GM12878 (cell line): ENCODE measurements at regions of chr1 and their contacts with region 1.

Region 1: DNA sequence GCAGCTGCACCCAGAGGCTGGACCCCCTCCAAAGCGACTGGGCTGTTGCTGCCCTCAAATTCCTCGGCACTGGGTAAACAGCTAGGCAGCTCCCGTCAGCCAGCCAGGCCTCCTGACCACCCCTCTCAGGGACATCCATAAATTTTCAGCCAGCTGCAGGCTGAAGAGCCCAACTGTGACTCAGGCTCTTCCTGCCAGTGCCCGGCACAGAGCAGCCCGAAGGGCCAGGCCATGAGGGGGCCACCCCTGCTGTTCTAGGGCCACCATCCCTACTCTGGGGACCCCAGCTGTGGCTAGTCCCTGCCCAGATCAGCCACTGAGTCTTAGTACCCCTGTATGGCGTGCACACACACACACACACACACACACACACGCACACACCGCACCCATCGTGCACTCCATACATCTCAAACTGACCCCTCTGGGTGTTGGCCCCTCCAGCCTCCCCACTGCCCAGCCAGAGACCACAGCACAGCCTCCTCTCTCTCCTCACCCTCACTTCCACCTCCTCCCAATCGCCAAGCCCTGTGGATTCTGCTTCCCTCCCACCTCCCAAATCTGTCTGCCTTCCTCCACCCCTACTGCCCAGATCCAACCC is 6.2 kb upstream of the LAPTM5 start:
- DNase-seq: no peak
- ATAC-seq: no peak
- H3K4me3 ChIP-seq: no peak overlapping the region
- H3K27ac ChIP-seq: peak overlapping the region; percentile 87
- H3K4me1 ChIP-seq: peaks cover 82% of the 10 kb centered on the region
- H3K27me3 ChIP-seq: no peaks in the 10 kb centered on the region
- CTCF ChIP-seq: no peak
- EP300 ChIP-seq: no peak
- POLR2A ChIP-seq: no peak
- RAD21 ChIP-seq: no peak

Region 2: GRCh38 chr1:30743584-30744059 is 20.1 kb before region 1 on chr1:
- CTCF ChIA-PET with region 1: interaction called, 107 read pairs
- POLR2A ChIA-PET with region 1: interaction called, 741 read pairs
- RAD21 ChIA-PET with region 1: interaction called, 462 read pairs
- SMC1A ChIA-PET with region 1: interaction called, 556 read pairs
- in situ Hi-C with region 1: no loop called
- intact Hi-C with region 1: loop called (anchors 2 kb)
- DNase-seq: peak; percentile 82
- ATAC-seq: peak; percentile 44
- H3K4me3 ChIP-seq: peak overlapping the region; percentile 98
- H3K27ac ChIP-seq: peak overlapping the region; percentile 93
- H3K4me1 ChIP-seq: peaks cover 91% of the 10 kb centered on the region
- H3K27me3 ChIP-seq: no peaks in the 10 kb centered on the region
- CTCF ChIP-seq: no peak; a peak in 1 of 6 replicates
- EP300 ChIP-seq: peak in 1 of 2 experiments; percentile 71; a peak in 2 of 4 replicates
- POLR2A ChIP-seq: no peak; the same call in 1 of the 2 replicates
- RAD21 ChIP-seq: no peak

Region 3: DNA sequence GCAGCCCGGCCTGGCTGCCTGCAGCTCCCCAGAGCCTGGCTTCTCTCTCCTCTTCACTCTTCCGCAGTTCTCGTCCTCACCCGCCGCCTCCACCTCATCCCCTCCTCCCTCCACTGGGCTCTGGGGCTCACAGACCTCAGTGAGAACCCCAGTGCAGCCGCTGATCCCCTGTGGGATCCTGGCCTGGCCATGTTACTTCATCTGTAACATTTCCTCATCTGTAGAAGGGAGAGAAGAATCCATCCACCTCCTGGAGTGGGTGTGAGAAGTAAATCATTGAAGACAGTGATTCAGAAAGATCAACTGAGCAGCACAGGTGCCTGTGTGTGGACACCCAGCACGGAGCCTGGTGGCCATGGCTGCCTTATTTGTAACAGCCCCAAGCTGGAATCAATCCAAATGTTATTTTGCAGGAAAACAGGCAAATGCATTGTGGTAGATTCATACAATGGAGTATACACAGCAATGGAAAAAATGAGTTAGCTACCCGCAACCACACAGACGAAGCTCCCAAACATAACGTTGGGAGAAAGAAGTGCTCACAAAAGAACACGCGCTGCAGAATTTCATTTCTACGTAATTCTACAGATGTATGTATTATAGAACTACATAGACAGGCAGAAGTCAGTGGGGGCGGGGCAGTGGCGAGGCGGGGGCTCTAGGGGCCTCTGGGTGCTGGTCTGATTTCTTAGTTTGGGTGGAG is 14.9 kb before region 1 on chr1:
- CTCF ChIA-PET with region 1: interaction called, 107 read pairs
- POLR2A ChIA-PET with region 1: interaction called, 741 read pairs
- RAD21 ChIA-PET with region 1: interaction called, 462 read pairs
- SMC1A ChIA-PET with region 1: interaction called, 440 read pairs
- in situ Hi-C with region 1: no loop called
- intact Hi-C with region 1: loop called (anchors 1 kb)
- DNase-seq: no peak
- ATAC-seq: peak; percentile 1; the same call in 2 of the 3 replicates
- H3K4me3 ChIP-seq: peak overlapping the region; percentile 98
- H3K27ac ChIP-seq: peak overlapping the region; percentile 93
- H3K4me1 ChIP-seq: peaks cover 87% of the 10 kb centered on the region
- H3K27me3 ChIP-seq: no peaks in the 10 kb centered on the region
- CTCF ChIP-seq: no peak
- EP300 ChIP-seq: no peak
- POLR2A ChIP-seq: no peak; the same call in 1 of the 2 replicates
- RAD21 ChIP-seq: no peak

Region 4: DNA sequence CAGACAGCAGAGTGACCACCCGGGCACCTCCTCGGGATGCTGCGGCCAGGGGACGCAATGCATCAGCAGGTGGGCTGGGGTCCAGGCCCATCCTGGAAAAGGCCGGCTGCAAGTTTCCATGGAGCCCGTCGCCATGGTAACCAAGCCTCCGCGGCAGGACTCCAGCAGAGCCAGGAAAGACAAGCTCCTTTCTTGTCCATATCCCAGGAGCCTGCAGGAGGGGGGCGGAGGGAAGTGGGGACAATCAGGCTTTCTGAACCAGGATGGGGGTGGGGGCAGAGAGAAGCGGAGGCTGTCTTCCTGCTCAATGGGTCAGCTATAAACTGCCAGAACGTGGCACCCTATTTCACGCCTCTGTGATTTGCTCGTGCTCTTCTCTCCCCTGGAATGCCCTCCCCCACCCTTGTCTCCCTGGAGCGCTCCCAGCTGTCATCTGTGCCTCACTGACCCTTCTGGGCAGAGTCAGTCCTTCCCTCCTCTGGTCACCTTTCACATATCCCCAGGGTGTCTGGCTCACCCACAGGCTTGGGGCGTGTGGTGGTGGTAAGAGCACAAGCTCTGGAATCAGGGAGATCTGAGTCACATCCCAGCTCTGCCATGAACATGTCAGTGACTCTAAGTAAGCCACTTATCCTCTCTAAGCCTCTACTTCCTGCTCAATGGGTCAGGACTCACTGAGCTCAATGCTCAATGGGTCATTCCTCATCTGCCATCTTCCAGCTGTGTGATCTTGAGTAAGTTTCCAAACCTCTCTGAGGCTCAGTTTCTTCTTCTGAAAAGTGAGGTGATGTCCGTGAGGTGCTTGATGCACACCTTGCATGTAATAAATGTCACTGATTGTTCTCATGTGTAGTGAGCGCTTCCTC is 52.7 kb after region 1 on chr1:
- CTCF ChIA-PET with region 1: no interaction called
- POLR2A ChIA-PET with region 1: no interaction called
- RAD21 ChIA-PET with region 1: no interaction called
- SMC1A ChIA-PET with region 1: no interaction called
- in situ Hi-C with region 1: no loop called
- intact Hi-C with region 1: no loop called
- DNase-seq: no peak
- ATAC-seq: no peak
- H3K4me3 ChIP-seq: no peak overlapping the region
- H3K27ac ChIP-seq: no peak overlapping the region
- H3K4me1 ChIP-seq: no peaks in the 10 kb centered on the region
- H3K27me3 ChIP-seq: peaks cover 13 to 16% of the 10 kb centered on the region in 2 experiments
- CTCF ChIP-seq: no peak
- EP300 ChIP-seq: no peak
- POLR2A ChIP-seq: no peak
- RAD21 ChIP-seq: no peak

Region 5: GRCh38 chr1:30830537-30830936 is 66.8 kb after region 1 on chr1:
- CTCF ChIA-PET with region 1: no interaction called
- POLR2A ChIA-PET with region 1: no interaction called
- RAD21 ChIA-PET with region 1: no interaction called
- SMC1A ChIA-PET with region 1: no interaction called
- in situ Hi-C with region 1: no loop called
- intact Hi-C with region 1: no loop called
- DNase-seq: no peak
- ATAC-seq: no peak
- H3K4me3 ChIP-seq: no peak overlapping the region
- H3K27ac ChIP-seq: no peak overlapping the region
- H3K4me1 ChIP-seq: no peaks in the 10 kb centered on the region
- H3K27me3 ChIP-seq: no peaks in the 10 kb centered on the region
- CTCF ChIP-seq: no peak
- EP300 ChIP-seq: no peak
- POLR2A ChIP-seq: no peak
- RAD21 ChIP-seq: no peak

Region 6: GRCh38 chr1:30902182-30902581 is 138.4 kb after region 1 on chr1:
- CTCF ChIA-PET with region 1: no interaction called
- POLR2A ChIA-PET with region 1: no interaction called
- RAD21 ChIA-PET with region 1: no interaction called
- SMC1A ChIA-PET with region 1: no interaction called
- in situ Hi-C with region 1: no loop called
- intact Hi-C with region 1: no loop called
- DNase-seq: no peak
- ATAC-seq: no peak
- H3K4me3 ChIP-seq: no peak overlapping the region
- H3K27ac ChIP-seq: no peak overlapping the region
- H3K4me1 ChIP-seq: no peaks in the 10 kb centered on the region
- H3K27me3 ChIP-seq: peaks cover 5 to 6% of the 10 kb centered on the region in 2 experiments
- CTCF ChIP-seq: no peak
- EP300 ChIP-seq: no peak
- POLR2A ChIP-seq: no peak
- RAD21 ChIP-seq: no peak